Adrenal gland (tissue), 19 donors: ENCODE measurements at regions of chr6 and their contacts with region 1.

Region 1: GRCh38 chr6:30719791-30720737 is at the start of gene TUBB:
- DNase-seq: peak; percentile 96 to 99 (median 98)
- H3K4me3 ChIP-seq: peak within 1 kb of the TSS; percentile 33 to 97 (median 80)
- H3K27ac ChIP-seq: peak within 1 kb of the TSS; percentile 89 to 99 (median 94)
- H3K4me1 ChIP-seq: peaks cover 16 to 55% of the 10 kb centered on the region in 2 donors
- H3K27me3 ChIP-seq: no peaks in the 10 kb centered on the region
- CTCF ChIP-seq: peak in 2 of 6 experiments; percentile 32 to 53
- POLR2A ChIP-seq: peak; percentile 91 to 98
- total RNA-seq, gene TUBB: 90.3 to 439 (median 219) TPM

Region 2: DNA sequence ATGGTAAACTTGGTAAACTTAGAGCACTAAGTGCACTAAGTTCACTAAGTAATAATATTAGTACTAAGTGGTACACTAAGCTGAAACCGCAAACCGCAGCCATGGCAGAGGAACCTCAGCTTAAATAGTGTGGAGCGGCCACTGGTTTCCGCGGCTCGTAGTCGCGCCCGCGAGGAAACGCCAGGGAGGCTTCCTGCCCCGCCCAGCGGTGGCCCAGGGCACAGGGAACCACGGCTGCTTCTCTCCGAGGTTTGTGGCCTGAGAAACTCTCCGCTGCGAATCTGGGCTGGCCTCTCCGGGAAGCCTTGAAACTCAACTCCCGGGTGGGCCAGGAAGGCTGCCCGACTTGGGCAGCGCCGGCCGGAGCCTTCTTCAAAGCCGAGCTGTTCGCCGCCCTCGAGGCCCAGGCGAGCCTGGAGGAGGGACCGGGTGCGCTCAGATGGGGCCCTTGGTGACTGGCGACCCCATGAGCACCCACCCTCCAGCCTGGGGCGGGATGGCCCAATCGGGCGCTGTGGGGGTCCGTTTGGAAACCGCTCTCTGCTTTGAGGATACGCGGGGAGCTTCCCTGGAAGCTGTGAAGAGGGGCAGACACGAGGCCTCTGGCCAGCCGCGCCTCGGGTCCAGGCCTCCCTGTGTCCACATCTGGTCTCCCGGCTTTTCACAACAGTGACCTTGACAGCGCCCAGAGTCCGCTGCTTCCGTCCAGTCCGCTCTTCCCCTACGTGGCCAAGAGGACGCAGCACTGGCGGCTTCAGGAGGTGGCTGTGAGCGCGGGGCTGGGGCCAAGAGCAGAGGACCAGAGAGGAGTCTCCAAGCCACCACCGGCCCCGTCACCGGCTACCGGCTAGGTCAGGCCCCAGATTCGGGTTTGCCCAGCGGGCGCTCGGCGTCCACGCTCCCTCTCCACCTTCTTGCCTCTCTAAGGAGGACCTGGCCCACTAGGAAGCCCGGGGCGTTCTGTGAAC is 256.1 kb before region 1 on chr6:
- intact Hi-C with region 1: no loop called
- DNase-seq: peak in 2 of 7 donors; percentile 18 to 48
- H3K4me3 ChIP-seq: no peak overlapping the region
- H3K27ac ChIP-seq: no peak overlapping the region
- H3K4me1 ChIP-seq: peaks cover 0 to 21% of the 10 kb centered on the region in 2 donors
- H3K27me3 ChIP-seq: peaks cover 91% of the 10 kb centered on the region
- CTCF ChIP-seq: no peak
- POLR2A ChIP-seq: no peak

Region 3: DNA sequence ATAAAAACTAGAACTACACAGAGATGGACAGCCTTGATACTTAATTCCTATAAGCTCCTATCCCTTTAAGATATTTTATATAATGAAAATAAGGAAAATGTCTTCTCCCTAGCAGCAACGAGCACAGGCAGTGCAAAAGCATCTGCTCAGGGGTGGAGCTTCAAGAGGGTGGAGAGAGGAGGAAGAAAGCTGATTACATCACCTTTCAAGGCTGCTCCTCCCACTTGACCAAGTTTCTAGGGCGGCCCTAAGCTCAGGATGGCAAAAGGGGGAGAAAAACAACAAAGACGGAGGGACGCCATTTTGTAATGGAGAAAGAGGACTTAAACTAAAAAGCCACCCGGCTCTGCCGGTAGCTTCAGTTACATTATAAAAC is 105.2 kb before region 1 on chr6:
- intact Hi-C with region 1: no loop called
- DNase-seq: peak; percentile 88 to 96 (median 94)
- H3K4me3 ChIP-seq: peak overlapping the region in 2 of 4 donors; percentile 61 to 81
- H3K27ac ChIP-seq: peak overlapping the region; percentile 89 to 96 (median 95)
- H3K4me1 ChIP-seq: peaks cover 10 to 51% of the 10 kb centered on the region in 2 donors
- H3K27me3 ChIP-seq: no peaks in the 10 kb centered on the region
- CTCF ChIP-seq: no peak
- POLR2A ChIP-seq: peak; percentile 39 to 88

Region 4: DNA sequence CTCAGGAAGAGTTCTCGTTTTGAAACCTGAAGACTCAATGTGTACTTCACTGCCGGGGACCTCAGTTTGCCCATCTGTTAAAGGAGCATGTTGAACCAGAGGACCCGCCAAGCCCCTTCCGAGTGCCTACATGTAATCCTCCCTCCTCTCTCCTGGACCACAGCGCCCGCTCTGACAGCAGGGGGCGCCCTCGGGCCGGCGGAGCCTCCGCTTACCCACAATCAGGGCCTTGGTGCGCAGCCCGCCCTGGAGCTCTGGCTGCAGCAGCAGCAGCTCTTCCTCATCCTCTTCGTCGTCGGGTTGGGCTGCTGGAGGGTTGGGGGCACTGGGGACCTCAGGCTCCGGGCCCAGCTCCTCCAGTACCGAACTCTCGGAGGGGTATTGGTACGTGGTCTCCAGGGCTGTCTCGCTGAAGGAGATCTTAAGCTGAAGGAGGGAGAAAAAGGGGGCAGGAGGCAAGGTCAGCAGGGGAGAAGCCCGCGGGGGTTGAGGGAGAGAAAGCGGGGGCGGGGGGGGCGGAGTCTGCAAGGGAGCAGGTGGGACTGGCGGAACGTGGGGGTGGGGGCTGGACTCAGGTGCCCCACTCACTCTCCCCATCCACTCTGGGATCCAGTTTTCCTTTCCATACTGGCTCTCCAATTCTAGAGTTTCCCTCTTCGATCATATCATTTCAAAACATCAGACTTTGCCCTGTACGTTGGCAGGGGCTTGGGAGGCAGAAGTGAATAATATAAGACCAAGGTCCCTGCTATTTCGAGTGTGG is 40.9 kb before region 1 on chr6:
- intact Hi-C with region 1: loop called (anchors 1 to 2 kb)
- DNase-seq: peak; percentile 79 to 92 (median 89)
- H3K4me3 ChIP-seq: no peak overlapping the region
- H3K27ac ChIP-seq: peak overlapping the region in 2 of 5 donors; percentile 45 to 95
- H3K4me1 ChIP-seq: peaks cover 27 to 56% of the 10 kb centered on the region in 2 donors
- H3K27me3 ChIP-seq: no peaks in the 10 kb centered on the region
- CTCF ChIP-seq: peak; percentile 95 to 98 (median 96)
- POLR2A ChIP-seq: no peak

Region 5: GRCh38 chr6:30686908-30687658 is 33.0 kb before region 1 on chr6:
- intact Hi-C with region 1: loop called (anchors 2 kb)
- DNase-seq: peak; percentile 90 to 97 (median 95)
- H3K4me3 ChIP-seq: peak overlapping the region; percentile 29 to 87 (median 78)
- H3K27ac ChIP-seq: peak overlapping the region; percentile 94 to 98 (median 95)
- H3K4me1 ChIP-seq: peaks cover 50 to 69% of the 10 kb centered on the region in 2 donors
- H3K27me3 ChIP-seq: no peaks in the 10 kb centered on the region
- CTCF ChIP-seq: peak in 2 of 6 experiments; percentile 9 to 11
- POLR2A ChIP-seq: peak; percentile 9 to 52

Region 6: DNA sequence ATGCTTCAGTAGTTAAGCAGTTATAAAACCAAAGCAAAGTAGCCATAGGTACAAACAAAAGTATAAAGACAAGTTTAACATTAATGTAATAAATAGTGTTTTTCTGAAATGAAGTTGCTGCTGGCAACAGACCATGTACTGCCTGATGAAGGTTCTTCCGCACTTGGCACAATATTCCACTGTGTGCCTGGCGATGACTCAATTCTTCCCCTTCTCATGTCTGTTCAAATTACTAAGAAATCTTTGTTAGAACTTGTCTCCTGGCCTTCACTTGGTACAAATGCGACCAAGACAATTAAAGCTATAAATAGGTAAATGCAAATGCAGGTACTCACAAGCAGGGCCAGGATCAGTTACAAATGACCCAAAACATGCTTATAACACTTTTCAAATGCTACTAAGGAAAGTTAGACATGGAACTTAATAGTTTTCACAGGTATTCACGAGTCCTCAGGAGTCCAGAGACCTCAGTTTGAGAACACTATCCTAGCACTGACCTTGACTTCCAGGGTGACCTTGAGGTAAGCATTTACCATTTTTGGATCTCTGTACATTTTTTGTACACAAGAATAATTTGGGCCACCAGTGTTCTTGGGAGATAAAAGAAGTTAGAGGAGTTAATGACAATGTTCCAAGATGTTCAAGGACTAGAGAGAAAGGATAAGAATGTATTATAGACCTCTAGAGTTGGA is 156.1 kb after region 1 on chr6:
- intact Hi-C with region 1: no loop called
- DNase-seq: peak; percentile 75 to 91 (median 84)
- H3K4me3 ChIP-seq: no peak overlapping the region
- H3K27ac ChIP-seq: peak overlapping the region; percentile 50 to 90 (median 83)
- H3K4me1 ChIP-seq: peaks cover 9 to 27% of the 10 kb centered on the region in 2 donors
- H3K27me3 ChIP-seq: no peaks in the 10 kb centered on the region
- CTCF ChIP-seq: no peak
- POLR2A ChIP-seq: no peak